Cardiac septum (tissue), 1 donor: ENCODE measurements at regions of chr9 and their contacts with region 1.

Region 1: GRCh38 chr9:129783516-129784361 is 19.2 kb upstream of the TOR1B start:
- DNase-seq: peak; percentile 84

Region 2: DNA sequence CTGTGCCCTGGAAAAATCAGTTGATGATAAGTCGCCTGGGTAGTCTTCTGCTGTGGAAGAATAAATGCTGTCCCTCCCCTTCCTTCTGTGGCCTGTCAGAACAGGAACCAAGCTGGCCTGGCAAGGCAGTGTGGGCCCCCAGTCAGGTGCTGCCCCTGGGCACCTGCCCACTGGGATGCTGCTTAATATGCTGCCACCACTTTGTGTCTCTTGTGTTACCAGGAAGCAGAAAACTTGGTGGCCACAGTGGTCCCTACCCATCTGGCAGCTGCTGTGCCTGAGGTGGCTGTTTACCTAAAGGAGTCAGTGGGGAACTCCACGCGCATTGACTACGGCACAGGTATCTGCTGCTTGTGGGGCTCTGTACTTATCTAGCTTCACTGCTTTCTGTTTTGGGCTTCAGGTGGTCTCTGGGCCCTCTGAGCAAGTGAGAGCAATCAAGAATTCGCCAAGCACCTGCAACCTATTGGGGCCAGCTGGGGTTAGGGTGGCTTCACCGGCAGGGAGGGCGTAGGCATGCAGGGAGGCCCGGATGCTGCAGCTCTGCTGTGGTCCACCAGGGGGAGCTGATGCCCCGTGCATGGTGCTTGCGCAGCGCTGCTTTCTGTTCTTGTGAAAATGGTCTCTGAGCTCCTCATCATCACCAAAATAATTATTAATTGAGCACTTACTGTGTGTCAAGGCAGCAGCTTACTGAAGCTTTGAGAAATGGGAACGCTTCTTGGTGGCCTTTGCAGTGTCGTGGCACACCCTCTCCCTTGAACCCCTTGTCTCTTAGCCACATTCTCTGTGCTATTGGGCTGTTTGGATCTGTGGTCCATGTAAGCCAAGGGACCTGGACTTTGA is 652.2 kb before region 1 on chr9:
- intact Hi-C with region 1: loop called (anchors 5 kb)
- DNase-seq: peak; percentile 91

Region 3: GRCh38 chr9:129451089-129452025 is 332.4 kb before region 1 on chr9:
- intact Hi-C with region 1: no loop called
- DNase-seq: no peak

Region 4: DNA sequence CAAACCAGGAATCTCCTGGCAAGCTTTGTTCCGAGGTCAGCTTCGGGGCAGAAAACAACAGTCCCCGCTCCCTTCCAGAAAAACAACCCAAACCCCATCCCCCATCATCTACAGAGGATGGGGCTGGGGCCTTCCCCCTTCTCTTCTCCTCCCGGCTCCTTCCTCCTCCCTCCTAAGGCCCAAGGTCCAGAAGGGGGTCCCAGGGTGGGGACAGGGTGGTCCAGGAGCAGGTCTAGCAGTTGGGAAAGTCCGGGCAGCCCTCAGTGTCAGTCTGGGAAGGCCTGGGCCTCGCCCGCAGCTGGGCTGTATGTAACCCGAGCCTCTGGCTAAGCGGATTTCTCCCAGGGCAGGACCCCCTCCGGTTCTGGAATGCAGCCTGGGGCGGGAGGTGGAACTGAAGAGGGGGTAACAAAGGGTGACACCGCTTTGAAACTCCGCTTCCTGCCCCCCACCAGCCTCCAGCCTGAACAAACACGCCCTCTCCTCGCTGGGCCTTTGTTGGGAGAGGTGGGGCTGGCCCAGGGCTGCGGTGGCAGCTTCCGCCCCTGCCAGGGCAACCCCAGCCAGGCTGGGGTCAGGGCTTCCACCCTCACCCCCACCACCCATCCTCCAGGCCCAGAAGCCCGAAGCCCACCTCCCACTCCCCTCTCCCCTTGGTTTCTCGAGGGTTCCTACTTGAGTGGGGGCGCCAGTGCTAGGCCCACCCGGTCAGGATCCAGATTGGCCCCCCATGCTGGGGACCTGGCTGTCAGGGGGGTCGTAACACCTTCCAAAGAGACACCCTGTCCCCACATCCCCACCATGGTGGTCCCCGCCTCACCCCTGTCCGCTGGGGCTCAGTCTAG is 226.3 kb before region 1 on chr9:
- intact Hi-C with region 1: no loop called
- DNase-seq: no peak

Region 5: GRCh38 chr9:129641746-129642513 is 141.8 kb before region 1 on chr9 and contains the start of gene ASB6:
- intact Hi-C with region 1: loop called (anchors 1 kb)
- DNase-seq: peak; percentile 99
- total RNA-seq, gene ASB6: 10.2 TPM

Region 6: DNA sequence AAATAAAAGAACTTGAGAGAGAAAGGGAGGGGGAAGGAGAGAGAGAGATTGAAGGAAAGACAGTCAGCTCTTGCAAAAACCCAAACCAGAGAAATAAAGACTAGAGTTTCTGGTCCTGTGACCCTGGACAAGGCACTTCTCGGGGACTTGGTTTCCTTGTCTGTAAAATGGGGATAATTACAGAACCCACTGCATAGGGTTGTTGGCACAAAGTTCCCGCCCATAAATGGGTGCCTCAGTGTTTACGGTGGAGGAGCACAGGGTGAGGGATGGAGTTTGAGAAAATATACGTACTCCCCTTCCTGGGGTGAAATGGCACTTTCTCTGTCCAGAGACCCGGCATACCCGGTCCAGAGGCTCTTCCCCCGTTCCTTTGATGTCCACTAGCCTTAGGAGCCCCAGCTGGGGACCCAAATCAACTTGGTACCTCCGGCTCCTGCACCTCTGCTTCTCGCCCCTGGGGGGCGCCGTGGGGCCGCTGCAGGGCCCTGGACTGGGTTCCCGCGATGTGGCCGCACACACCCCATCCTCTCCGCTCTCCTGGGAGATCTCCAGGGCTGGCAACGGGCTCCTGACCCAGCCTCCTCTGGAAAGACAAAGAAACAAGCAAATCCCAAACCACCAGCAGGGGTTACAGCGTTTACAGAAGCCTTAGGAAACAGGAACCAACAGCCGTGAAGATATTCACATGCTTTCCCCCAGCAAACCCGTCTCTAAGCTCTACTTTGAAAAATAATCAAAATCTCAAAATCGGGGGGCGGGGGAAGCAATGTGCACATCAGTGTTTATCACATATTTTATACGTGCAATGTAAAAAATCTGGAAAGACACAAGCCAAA is 57.2 kb before region 1 on chr9:
- intact Hi-C with region 1: no loop called
- DNase-seq: peak; percentile 85

Region 7: DNA sequence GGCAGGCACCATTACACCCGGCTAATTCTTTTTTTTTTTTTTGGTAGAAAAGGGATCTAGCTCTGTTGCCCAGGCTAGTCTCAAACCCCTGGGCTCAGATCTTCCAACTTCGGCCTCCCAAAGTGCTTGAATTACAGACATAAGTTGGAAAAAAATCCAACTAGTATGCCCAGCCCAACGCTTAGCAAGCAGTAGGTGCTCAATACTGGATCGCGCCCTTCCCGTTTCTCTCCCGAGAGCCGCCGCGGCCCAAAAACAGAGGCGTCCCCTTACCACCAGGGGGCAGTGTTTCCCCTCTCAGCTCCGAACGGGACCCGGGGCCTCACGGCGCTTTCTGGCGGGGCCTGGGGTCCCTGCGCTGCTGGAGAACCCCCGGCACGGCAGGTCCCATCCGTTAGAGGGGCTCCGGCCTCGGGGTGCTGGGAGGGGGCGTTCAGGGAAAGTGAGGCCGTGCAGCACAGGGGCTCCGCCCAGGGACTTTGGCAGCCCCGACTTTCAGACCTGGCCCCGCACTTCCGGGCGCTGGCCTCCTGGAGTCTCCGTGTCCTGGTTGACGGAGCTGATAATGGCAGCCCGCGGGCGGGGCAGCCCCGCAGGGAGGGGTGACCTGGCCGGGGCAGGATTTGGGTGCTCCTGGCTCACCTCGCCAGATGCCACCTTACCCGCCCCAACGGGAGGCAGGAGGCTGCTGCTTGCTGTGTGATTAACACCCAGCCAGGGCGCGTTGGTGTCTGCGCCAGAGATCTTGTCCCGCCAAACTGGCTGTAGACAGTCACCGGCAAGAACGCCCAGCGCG is 46.1 kb before region 1 on chr9:
- intact Hi-C with region 1: loop called (anchors 1 kb)
- DNase-seq: peak; percentile 93